ENCODE measurements at regions of chr5 and their contacts with region 1.

Region 1: GRCh38 chr5:80503641-80504040 is 15.7 kb downstream of the FAM151B start:
- DNase-seq: no peak
- H3K4me3 ChIP-seq: no peak overlapping the region
- H3K27ac ChIP-seq: no peak overlapping the region
- H3K4me1 ChIP-seq: no peaks in the 10 kb centered on the region
- H3K27me3 ChIP-seq: no peaks in the 10 kb centered on the region
- CTCF ChIP-seq: no peak
- POLR2A ChIP-seq: no peak

Region 2: DNA sequence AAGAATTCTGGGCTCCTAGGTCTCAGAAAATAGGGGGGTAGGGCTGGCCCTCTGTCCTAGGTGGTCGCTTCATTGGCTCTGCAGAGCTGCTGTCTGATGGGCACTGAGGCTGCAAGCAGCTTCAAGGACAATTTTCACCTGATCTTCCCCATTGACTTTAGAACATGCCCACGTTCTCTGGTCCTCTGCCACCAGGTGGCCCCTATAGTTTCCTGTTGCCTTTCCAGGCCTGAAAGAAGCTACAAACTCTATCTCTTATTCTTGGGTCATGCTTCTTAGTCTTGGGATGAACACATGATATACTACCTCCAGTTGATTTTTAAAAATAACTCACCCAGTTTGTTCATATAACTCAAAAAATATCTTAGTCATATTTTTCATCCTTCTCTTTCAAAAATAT is 157.6 kb before region 1 on chr5:
- intact Hi-C with region 1: loop called in 1 of 2 experiments (anchors 10 kb)
- DNase-seq: peak in 1 of 7 donors; percentile 14
- H3K4me3 ChIP-seq: no peak overlapping the region
- H3K27ac ChIP-seq: no peak overlapping the region
- H3K4me1 ChIP-seq: no peaks in the 10 kb centered on the region
- H3K27me3 ChIP-seq: no peaks in the 10 kb centered on the region
- CTCF ChIP-seq: peak in 3 of 6 experiments; percentile 13 to 29 (median 15)
- POLR2A ChIP-seq: no peak

Measured in adrenal gland (tissue), 19 donors.